ENCODE measurements at regions of chr7 and their contacts with region 1.

Region 1: DNA sequence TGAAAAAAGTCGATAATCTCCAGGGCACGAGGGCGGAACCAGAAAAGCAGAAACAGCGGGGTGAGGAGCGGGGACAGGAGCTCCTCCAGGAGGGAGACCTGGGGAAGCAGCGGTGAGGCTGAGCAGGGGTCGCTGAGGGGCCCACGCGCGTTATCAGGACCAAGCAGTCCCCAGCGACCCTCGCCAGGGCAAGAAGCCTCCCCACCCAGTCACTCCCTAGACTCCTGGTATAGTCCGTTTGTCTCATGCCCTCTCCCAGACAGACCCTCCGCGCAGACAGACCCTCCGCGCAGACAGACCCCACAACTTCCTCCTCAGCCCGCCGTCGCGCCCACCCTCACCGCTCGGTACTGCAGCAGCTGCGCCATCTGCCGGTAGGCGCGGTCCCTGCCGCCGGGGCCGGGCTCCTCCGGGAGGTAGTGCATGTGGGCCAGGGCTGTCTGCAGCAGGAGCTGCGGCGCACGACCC is 6.3 kb downstream of the ATG9B start:
- DNase-seq: peak; percentile 86
- H3K4me3 Mint-ChIP-seq: peak overlapping the region; percentile 63
- H3K27ac Mint-ChIP-seq: no peak overlapping the region
- H3K4me1 Mint-ChIP-seq: peaks cover 47% of the 10 kb centered on the region
- H3K27me3 Mint-ChIP-seq: peaks cover 11% of the 10 kb centered on the region

Region 2: GRCh38 chr7:150962553-150963399 is 55.2 kb before region 1 on chr7:
- CTCF ChIA-PET with region 1: interaction called, 26 read pairs
- POLR2A ChIA-PET with region 1: no interaction called
- intact Hi-C with region 1: loop called (anchors 2 kb)
- DNase-seq: peak; percentile 66
- H3K4me3 Mint-ChIP-seq: no peak overlapping the region
- H3K27ac Mint-ChIP-seq: no peak overlapping the region
- H3K4me1 Mint-ChIP-seq: peaks cover 6% of the 10 kb centered on the region
- H3K27me3 Mint-ChIP-seq: peaks cover 20% of the 10 kb centered on the region

Region 3: GRCh38 chr7:150974468-150975391 is 43.3 kb before region 1 on chr7:
- CTCF ChIA-PET with region 1: interaction called, 4 read pairs
- POLR2A ChIA-PET with region 1: no interaction called
- intact Hi-C with region 1: loop called (anchors 5 kb)
- DNase-seq: peak; percentile 83
- H3K4me3 Mint-ChIP-seq: peak overlapping the region; percentile 83
- H3K27ac Mint-ChIP-seq: peak overlapping the region; percentile 77
- H3K4me1 Mint-ChIP-seq: peaks cover 23% of the 10 kb centered on the region
- H3K27me3 Mint-ChIP-seq: peaks cover 21% of the 10 kb centered on the region

Region 4: DNA sequence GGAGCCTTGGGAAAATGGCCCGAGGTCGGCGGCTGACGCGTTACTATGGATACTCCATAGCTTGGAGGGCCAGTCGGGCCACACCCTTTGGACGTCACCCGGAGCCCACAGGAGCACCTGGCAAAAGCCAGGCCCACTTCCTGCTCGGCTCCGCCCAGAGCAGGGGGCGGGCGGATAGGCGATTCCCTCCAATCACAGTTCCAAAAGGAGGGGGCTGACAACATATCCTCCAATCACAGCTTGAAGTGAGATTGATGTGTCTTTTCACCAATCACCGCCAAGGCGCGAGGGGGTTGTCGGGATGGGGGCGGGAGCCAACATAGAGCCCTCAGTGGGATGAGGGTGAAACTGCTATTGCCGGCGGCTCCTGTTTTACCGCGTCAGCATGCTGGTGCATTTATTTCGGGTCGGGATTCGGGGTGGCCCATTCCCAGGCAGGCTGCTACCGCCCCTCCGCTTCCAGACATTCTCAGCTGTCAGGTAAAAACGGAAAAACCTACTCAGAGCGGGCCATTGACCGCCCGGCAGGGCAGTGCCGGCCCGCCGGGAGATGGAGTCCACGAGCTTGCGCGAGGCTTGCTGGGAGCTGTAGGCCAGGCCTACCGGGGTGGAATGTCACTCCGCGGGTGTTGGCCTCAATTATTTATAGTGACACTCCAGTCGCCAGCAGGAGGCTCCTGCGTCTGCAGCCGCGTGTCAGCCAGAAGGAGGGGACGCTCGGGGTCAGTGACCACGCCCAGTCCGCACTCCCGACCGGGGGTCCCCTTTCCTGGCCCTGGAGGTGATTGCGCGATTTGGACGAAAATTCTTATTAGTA is 10.4 kb after region 1 on chr7 and contains the start of gene ABCB8:
- CTCF ChIA-PET with region 1: interaction called, 33 read pairs
- POLR2A ChIA-PET with region 1: interaction called, 9 read pairs
- intact Hi-C with region 1: loop called (anchors 1 kb)
- DNase-seq: peak; percentile 99
- H3K4me3 Mint-ChIP-seq: peak within 1 kb of the TSS; percentile 94
- H3K27ac Mint-ChIP-seq: peak within 1 kb of the TSS; percentile 90
- H3K4me1 Mint-ChIP-seq: peaks cover 18% of the 10 kb centered on the region
- H3K27me3 Mint-ChIP-seq: no peaks in the 10 kb centered on the region
- total RNA-seq, gene ABCB8: 48.4 to 49.5 TPM

Region 5: DNA sequence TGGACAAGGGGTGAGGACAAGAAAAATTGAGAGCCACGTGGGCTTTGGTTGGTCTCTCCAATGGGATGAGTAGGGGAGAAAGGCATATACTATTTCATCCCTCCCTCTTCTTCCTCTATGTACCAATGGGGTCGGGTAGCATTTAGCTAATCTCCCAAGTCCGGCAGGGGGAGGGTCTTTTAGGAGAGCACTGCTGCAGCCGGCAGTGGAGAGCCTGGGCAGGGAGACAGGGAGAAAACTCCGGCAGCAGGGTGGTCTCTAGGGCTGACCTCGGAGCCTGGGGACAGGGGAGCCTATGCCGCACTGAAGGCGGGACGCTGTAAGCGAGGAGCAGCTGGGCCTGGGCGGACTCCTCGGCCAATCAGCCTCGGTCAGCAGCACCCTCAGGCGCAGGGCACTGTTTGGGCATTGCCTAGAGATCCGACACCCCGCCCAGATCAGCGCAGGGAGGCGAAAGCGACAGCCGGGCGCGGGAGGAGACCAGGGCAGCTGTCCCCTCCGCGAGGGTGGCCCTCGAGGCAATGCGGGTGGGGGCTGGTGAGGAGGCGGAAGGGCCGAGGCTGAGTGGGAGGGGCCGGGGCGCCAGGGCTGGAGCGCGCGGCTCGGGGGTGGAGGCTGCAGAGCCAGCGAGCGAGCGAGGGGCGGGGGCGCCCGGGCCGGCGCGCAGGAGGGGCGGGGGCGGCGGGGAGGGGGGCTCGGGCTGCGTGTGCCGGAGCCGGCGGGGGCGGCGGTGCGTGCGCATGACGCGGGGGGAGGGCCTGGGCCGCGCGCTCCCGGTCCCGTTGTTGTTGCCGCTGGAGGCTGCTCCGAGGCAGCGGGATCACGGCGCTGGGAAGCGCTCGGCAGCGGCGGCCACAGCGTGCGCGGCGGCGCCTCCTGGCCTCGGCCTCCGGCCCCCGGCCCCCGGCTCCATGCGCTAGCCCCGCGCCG is 68.0 kb after region 1 on chr7 and contains the start of gene AGAP3:
- CTCF ChIA-PET with region 1: interaction called, 10 read pairs
- POLR2A ChIA-PET with region 1: interaction called, 4 read pairs
- intact Hi-C with region 1: no loop called
- DNase-seq: peak; percentile 59
- H3K4me3 Mint-ChIP-seq: peak within 1 kb of the TSS; percentile 82
- H3K27ac Mint-ChIP-seq: peak within 1 kb of the TSS; percentile 60
- H3K4me1 Mint-ChIP-seq: peaks cover 38% of the 10 kb centered on the region
- H3K27me3 Mint-ChIP-seq: peaks cover 5% of the 10 kb centered on the region
- total RNA-seq, gene AGAP3: 29.8 to 36.5 TPM